ENCODE measurements at regions of chr15 and their contacts with region 1.

Region 1: GRCh38 chr15:40440743-40441564 is at the start of gene BAHD1:
- DNase-seq: peak; percentile 94 to 95 (median 95)
- H3K4me3 ChIP-seq: peak within 1 kb of the TSS; percentile 48 to 79 (median 73)
- H3K27ac ChIP-seq: peak within 1 kb of the TSS in 1 of 2 experiments; percentile 68
- H3K4me1 ChIP-seq: peaks cover 2 to 64% (median 60%) of the 10 kb centered on the region in 4 experiments
- H3K27me3 ChIP-seq: peaks cover 0 to 42% (median 18%) of the 10 kb centered on the region in 5 experiments

Region 2: GRCh38 chr15:40029979-40030893 is 410.7 kb before region 1 on chr15:
- CTCF ChIA-PET with region 1: no interaction called
- POLR2A ChIA-PET with region 1: no interaction called
- DNase-seq: peak in 2 of 3 donors; percentile 51
- H3K4me3 ChIP-seq: no peak overlapping the region
- H3K27ac ChIP-seq: no peak overlapping the region
- H3K4me1 ChIP-seq: no peaks in the 10 kb centered on the region
- H3K27me3 ChIP-seq: no peaks in the 10 kb centered on the region

Region 3: GRCh38 chr15:40323239-40323952 is 117.6 kb before region 1 on chr15 and contains the start of gene INAFM2:
- CTCF ChIA-PET with region 1: no interaction called
- POLR2A ChIA-PET with region 1: no interaction called
- DNase-seq: peak; percentile 96 to 98 (median 98)
- H3K4me3 ChIP-seq: peak within 1 kb of the TSS; percentile 41 to 84 (median 81)
- H3K27ac ChIP-seq: peak within 1 kb of the TSS in 1 of 2 experiments; percentile 59
- H3K4me1 ChIP-seq: peaks cover 32 to 64% (median 59%) of the 10 kb centered on the region in 4 experiments
- H3K27me3 ChIP-seq: no peaks in the 10 kb centered on the region

Region 4: DNA sequence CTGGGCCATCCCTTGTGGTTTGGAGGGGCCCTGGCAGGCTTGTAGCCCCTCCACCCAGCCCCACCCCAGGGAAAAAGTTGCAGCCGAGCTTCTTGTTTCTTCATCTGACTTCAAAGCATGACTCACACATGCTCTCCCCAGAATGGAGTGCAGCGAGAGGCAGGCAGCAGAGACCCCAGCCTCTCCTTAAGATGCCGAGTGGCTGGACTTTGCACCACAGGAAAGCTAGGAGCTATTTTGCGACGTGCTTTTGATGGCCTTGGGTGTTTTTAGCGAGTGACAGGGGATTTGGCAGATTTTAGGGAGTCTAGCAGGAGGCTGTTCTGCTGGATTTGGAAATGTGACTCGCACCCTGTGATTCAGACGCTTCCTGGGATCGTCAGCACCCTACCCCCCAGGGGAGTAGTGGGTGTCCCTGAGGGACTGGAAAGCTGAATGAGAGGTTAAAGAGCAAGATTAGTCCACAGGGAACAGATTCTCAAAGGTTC is 14.0 kb after region 1 on chr15:
- CTCF ChIA-PET with region 1: interaction called, 29 read pairs
- POLR2A ChIA-PET with region 1: interaction called, 3 read pairs
- DNase-seq: peak in 2 of 3 donors; percentile 30 to 31
- H3K4me3 ChIP-seq: peak overlapping the region in 1 of 7 experiments; percentile 30
- H3K27ac ChIP-seq: no peak overlapping the region
- H3K4me1 ChIP-seq: peaks cover 0 to 63% (median 36%) of the 10 kb centered on the region in 4 experiments
- H3K27me3 ChIP-seq: no peaks in the 10 kb centered on the region

Measured in common myeloid progenitor, CD34-positive (primary cell).